ENCODE measurements at regions of chr15 and their contacts with region 1.

Region 1: GRCh38 chr15:40338041-40338657 is 2.6 kb downstream of the CCDC9B start:
- DNase-seq: peak; percentile 68
- H3K4me3 Mint-ChIP-seq: peak overlapping the region; percentile 79
- H3K27ac Mint-ChIP-seq: peak overlapping the region; percentile 79
- H3K4me1 Mint-ChIP-seq: peaks cover 38% of the 10 kb centered on the region
- H3K27me3 Mint-ChIP-seq: no peaks in the 10 kb centered on the region
- CTCF ChIP-seq: peak; percentile 76

Region 2: GRCh38 chr15:39801641-39802309 is 536.4 kb before region 1 on chr15:
- CTCF ChIA-PET with region 1: no interaction called
- POLR2A ChIA-PET with region 1: no interaction called
- intact Hi-C with region 1: no loop called
- DNase-seq: peak; percentile 51
- H3K4me3 Mint-ChIP-seq: no peak overlapping the region
- H3K27ac Mint-ChIP-seq: no peak overlapping the region
- H3K4me1 Mint-ChIP-seq: peaks cover 9% of the 10 kb centered on the region
- H3K27me3 Mint-ChIP-seq: no peaks in the 10 kb centered on the region
- CTCF ChIP-seq: peak; percentile 30

Region 3: DNA sequence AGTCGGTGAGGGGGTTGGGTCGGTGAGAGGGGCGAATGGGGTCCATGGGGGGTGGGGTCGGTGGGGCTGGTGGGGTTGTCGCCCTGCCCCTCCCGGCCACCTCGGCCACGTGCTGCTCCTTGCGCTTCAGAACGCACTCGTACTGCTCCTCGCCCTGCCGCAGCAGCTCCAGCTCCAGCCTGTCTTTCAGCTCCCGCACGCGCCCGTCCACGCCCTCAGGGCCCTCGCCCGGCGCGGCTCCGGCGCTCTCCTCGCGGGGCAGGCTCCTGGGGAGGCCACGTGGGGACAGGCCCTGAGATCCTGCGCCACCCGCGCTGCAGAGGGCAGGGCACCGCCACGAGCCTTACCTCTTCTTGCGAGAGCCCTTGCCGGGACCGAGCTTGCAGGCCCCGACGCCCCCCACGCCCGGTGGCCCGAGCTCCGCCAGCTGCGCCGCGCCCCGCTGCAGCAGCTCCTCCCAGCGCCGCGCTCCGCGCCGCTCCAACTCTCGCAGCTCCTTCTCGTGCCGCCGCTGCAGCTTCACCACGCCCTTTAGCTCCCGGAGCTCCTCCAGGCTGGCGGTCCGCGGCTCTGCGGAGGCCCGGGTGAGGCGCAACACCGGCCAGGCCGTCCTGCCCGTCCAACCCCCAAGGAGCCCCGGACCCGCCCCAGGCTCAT is 47.1 kb before region 1 on chr15:
- CTCF ChIA-PET with region 1: interaction called, 62 read pairs
- POLR2A ChIA-PET with region 1: interaction called, 3 read pairs
- intact Hi-C with region 1: no loop called
- DNase-seq: peak; percentile 63
- H3K4me3 Mint-ChIP-seq: peak overlapping the region; percentile 62
- H3K27ac Mint-ChIP-seq: no peak overlapping the region
- H3K4me1 Mint-ChIP-seq: peaks cover 4% of the 10 kb centered on the region
- H3K27me3 Mint-ChIP-seq: peaks cover 10% of the 10 kb centered on the region
- CTCF ChIP-seq: no peak

Region 4: DNA sequence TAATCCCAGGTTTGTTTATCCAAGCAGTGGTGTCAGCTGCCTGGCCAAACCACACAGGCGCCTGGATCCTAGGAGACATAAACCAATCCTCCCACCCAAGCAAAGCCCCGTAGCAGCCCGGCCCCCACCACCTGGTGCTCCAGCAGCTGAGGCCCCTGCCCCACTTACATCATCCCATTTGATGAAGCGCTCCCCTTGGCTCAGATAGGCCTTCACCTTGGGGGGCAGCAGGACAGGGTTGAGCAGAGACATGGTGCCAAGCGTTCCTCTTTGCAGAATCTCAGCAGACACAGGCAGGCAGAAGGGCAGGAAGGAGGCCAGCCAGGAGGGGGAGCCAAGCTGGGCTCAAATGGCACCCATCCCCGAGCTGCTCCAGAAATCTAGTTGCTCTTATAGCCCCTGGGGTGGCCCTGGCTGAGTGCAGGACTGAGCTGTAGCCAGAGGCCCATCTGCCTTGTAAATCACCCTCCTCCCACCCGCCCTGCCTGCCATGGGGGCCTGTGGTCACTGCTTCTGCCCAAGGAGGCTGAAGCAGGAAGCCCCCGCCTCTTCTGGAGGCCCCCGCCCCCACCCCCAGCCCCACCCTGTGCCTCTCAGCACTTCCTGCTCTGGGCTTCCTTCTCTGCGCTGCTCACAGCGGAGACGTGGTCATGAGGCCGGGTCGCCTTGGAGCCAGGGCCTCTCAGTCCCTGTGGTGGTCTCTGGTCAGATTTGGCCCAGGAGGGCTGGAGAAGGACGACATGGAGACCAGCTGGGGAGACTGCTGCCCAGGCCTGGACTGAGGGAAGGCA is 30.5 kb before region 1 on chr15 and contains the start of gene PLCB2:
- CTCF ChIA-PET with region 1: interaction called, 58 read pairs
- POLR2A ChIA-PET with region 1: interaction called, 3 read pairs
- intact Hi-C with region 1: no loop called
- DNase-seq: no peak
- H3K4me3 Mint-ChIP-seq: no peak within 1 kb of the TSS
- H3K27ac Mint-ChIP-seq: no peak within 1 kb of the TSS
- H3K4me1 Mint-ChIP-seq: no peaks in the 10 kb centered on the region
- H3K27me3 Mint-ChIP-seq: peaks cover 13% of the 10 kb centered on the region
- CTCF ChIP-seq: no peak
- total RNA-seq, gene PLCB2: 0.15 and 0.84 TPM in 2 replicates

Region 5: DNA sequence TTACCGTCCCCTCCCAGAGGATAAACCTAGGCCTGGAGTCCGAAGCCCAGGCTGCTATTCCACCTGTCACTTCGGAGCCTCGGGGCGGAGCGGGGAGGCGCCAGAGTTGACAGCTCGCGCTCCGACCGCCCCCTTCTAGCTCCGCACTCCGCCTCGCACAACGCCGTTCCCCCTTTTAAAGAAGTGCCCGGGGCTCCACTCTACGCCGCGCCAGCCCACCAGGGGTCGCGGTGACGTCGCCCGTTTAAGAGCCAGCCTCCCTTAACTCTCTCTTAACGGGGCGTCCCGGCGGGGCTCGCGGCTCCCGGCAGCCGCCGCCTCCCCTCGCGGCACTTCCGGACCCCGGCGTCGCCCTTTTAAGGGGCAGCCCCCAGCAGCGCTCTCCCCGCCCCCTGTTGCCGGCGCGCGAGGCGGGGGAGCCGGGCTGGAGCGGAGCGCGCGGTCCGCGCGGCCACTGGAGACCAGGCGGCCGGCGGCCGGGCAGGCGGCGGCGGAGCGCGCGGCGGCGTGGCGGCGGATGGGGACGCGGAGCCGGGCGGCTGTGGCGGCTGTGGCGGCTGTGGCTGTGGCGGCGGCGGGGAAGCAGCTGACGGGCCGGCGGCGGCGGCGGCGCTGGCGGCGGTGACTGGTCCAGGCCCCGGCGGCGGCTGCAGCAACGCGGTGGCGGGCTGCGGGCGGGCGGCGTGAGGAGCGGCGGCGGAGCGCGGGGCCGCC is 14.8 kb before region 1 on chr15 and contains the start of gene INAFM2:
- CTCF ChIA-PET with region 1: interaction called, 123 read pairs
- POLR2A ChIA-PET with region 1: interaction called, 62 read pairs
- intact Hi-C with region 1: loop called (anchors 1 kb)
- DNase-seq: peak; percentile 89
- H3K4me3 Mint-ChIP-seq: peak within 1 kb of the TSS; percentile 69
- H3K27ac Mint-ChIP-seq: no peak within 1 kb of the TSS
- H3K4me1 Mint-ChIP-seq: peaks cover 30% of the 10 kb centered on the region
- H3K27me3 Mint-ChIP-seq: no peaks in the 10 kb centered on the region
- CTCF ChIP-seq: peak; percentile 32
- total RNA-seq, gene INAFM2: 14.9 and 15.7 TPM in 2 replicates

Region 6: GRCh38 chr15:41022487-41023090 is 684.4 kb after region 1 on chr15:
- CTCF ChIA-PET with region 1: no interaction called
- POLR2A ChIA-PET with region 1: no interaction called
- intact Hi-C with region 1: no loop called
- DNase-seq: peak; percentile 48
- H3K4me3 Mint-ChIP-seq: no peak overlapping the region
- H3K27ac Mint-ChIP-seq: no peak overlapping the region
- H3K4me1 Mint-ChIP-seq: peaks cover 5% of the 10 kb centered on the region
- H3K27me3 Mint-ChIP-seq: no peaks in the 10 kb centered on the region
- CTCF ChIP-seq: peak; percentile 55

Measured in MCF 10A (cell line).